HEK293 (cell line): ENCODE measurements at regions of chr20 and their contacts with region 1.

Region 1: GRCh38 chr20:49846206-49846807 is 33.7 kb downstream of the SLC9A8 start:
- H3K4me3 ChIP-seq: no peak overlapping the region
- H3K27ac ChIP-seq: no peak overlapping the region
- H3K4me1 ChIP-seq: no peaks in the 10 kb centered on the region
- CTCF ChIP-seq: no peak

Region 2: DNA sequence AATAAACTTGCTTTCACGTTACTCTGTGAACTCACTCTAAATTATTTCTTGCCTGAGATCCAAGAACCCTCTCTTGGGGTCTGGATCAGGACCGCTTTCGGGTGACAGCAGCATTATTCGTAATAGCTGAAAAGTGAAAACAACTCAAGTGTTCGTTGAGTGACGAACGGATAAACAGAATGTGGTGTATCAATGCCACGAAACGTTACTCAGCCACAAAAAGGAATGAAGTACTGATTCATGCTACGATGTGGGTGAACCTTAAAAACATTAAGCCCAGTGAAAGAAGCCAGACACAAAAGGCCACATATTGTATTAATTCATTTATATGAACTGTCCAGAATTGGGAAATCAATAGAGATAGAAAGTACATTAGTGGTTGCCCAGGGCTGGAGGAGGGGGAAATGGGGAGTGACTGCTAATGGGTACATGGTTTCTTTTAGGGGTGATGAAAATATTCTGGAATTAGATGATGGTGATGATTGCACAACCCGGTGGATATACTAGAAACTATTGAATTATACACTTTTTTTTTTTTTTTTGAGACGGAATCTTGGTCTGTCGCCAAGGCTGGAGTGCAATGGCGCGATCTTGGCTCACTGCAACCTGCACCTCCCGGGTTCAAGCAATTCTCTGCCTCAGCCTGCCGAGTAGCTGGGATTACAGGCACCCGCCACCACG is 286.8 kb before region 1 on chr20:
- CTCF ChIA-PET with region 1: interaction called, 10 read pairs
- POLR2A ChIA-PET with region 1: no interaction called
- H3K4me3 ChIP-seq: no peak overlapping the region
- H3K27ac ChIP-seq: no peak overlapping the region
- H3K4me1 ChIP-seq: no peaks in the 10 kb centered on the region
- CTCF ChIP-seq: no peak

Region 3: DNA sequence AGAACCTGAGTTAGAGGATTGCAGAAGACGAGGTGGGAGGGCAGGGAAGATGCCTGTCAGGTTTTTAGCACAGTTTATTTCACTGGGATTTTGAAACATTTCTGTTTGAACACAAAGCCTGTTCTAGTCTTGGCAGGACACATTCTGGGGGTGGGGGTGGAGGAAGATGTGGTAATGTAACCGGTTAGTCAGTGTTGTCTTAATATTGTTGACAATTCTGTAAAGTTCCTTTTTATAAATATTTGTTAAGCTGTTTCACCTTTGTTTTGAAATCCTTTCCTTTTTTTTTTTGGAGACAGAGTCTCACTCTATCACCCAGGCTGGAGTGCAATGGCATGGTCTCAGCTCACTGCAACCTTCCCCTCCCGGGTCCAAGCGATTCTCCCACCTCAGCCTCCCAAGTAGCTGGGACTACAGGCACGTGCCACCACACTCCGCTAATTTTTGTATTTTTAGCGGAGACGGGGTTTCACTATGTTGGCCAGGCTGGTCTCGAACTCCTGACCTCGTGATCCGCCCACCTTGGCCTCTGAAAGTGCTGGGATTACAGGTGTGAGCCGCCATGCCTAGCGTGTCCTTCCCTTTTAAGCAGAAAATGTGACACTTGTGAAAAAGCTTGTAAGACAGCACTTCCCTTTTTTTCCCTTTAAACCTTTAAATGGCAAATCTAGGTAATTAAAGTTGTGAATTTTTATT is 13.5 kb before region 1 on chr20:
- CTCF ChIA-PET with region 1: interaction called, 23 read pairs
- POLR2A ChIA-PET with region 1: no interaction called
- H3K4me3 ChIP-seq: no peak overlapping the region
- H3K27ac ChIP-seq: no peak overlapping the region
- H3K4me1 ChIP-seq: no peaks in the 10 kb centered on the region
- CTCF ChIP-seq: no peak

Region 4: GRCh38 chr20:49888345-49888966 is 42.1 kb after region 1 on chr20:
- CTCF ChIA-PET with region 1: interaction called, 10 read pairs
- POLR2A ChIA-PET with region 1: no interaction called
- H3K4me3 ChIP-seq: no peak overlapping the region
- H3K27ac ChIP-seq: no peak overlapping the region
- H3K4me1 ChIP-seq: no peaks in the 10 kb centered on the region
- CTCF ChIP-seq: peak; percentile 85